KBM-7 (cell line): ENCODE measurements at regions of chr11 and their contacts with region 1.

Region 1: GRCh38 chr11:36292311-36292722 is 3.1 kb upstream of the COMMD9 start:
- DNase-seq: peak; percentile 83

Region 2: GRCh38 chr11:35873721-35874120 is 418.6 kb before region 1 on chr11:
- in situ Hi-C with region 1: no loop called
- DNase-seq: no peak

Region 3: GRCh38 chr11:36478700-36479329 is 186.5 kb after region 1 on chr11:
- in situ Hi-C with region 1: loop called (anchors 10 kb)
- DNase-seq: peak; percentile 80